ENCODE measurements at regions of chr6 and their contacts with region 1.

Region 1: GRCh38 chr6:37018198-37019064 is 13.0 kb downstream of the FGD2 start:
- DNase-seq: peak; percentile 91
- H3K4me3 ChIP-seq: no peak overlapping the region
- H3K27ac ChIP-seq: no peak overlapping the region
- H3K4me1 ChIP-seq: peaks cover 13% of the 10 kb centered on the region
- CTCF ChIP-seq: peak; percentile 93

Region 2: GRCh38 chr6:36765594-36766398 is 252.6 kb before region 1 on chr6:
- CTCF ChIA-PET with region 1: no interaction called
- POLR2A ChIA-PET with region 1: no interaction called
- intact Hi-C with region 1: loop called (anchors 1 kb)
- DNase-seq: peak; percentile 91
- H3K4me3 ChIP-seq: peak overlapping the region; percentile 2
- H3K27ac ChIP-seq: peak overlapping the region; percentile 4
- H3K4me1 ChIP-seq: peaks cover 45% of the 10 kb centered on the region
- CTCF ChIP-seq: peak; percentile 99

Region 3: DNA sequence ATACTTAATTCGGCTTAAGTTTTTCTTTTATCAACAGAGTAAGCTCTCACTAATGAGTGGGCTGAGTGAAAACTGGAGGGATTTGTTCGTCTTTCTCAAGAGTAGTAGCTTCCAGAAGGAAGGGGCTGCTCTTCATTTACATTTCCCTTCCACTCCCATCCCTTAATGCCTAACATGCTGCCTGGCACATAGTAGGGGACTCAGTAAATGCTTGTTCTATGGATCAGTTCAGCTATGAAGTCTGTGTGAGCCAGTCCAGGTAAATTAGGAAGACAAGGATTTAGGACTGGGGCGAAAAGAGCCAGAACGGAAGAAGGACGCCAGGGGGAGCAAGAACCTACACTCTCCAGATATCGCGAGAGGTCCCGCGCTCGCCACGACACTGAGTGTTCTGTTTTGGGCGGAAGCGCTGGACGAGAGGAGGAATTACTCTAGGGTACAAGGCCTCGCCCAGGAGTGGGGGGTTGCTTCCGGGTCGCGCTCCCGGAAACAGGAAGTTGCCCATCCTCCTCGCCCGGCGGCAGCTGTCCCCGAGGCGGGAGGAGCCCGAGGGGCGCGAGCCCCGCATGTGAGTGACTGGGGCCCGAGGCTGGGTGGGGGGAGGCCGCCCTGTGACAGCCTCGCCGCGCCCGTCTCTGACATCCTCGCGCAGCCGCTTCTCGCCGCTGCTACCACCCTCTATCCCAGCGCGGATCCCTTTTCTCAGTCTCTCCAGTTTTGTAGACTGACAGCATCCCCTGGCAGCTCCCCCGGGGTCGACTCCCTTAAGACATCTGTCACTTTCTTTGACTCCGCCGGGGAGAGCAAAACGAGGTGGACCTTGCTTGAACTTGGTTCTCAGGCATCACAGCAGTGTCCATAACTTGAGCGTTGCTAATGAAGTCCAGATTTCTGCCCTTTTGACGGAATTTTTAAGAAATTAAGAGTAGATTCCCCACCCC is 132.7 kb before region 1 on chr6 and contains the start of gene C6orf89:
- CTCF ChIA-PET with region 1: interaction called, 7 read pairs
- POLR2A ChIA-PET with region 1: interaction called, 7 read pairs
- intact Hi-C with region 1: loop called (anchors 1 kb)
- DNase-seq: peak; percentile 100
- H3K4me3 ChIP-seq: peak within 1 kb of the TSS; percentile 82
- H3K27ac ChIP-seq: peak within 1 kb of the TSS; percentile 40
- H3K4me1 ChIP-seq: peaks cover 24% of the 10 kb centered on the region
- CTCF ChIP-seq: peak; percentile 87
- total RNA-seq, gene C6orf89: 14.7 and 20.1 TPM in 2 replicates

Region 4: DNA sequence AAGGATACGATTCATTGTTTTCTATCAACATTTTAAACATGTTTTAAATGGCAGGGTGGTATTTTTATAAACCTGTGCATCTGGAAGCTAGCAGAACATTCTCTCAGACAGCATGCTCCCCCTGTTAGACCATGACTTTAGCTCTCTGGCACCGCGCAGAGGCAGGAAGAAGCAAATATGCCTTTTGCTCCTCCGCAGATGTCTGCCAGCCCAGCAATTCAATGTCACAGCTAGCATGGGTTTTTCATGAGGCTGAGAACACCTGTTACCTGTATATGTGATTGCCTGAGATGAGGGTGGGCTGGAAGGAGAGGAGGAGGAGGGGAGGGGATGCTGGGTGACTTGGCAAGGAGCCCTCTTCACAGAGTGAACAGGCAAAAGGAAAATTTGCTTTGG is 39.1 kb before region 1 on chr6:
- CTCF ChIA-PET with region 1: interaction called, 31 read pairs
- POLR2A ChIA-PET with region 1: interaction called, 6 read pairs
- intact Hi-C with region 1: loop called (anchors 1 kb)
- DNase-seq: no peak
- H3K4me3 ChIP-seq: no peak overlapping the region
- H3K27ac ChIP-seq: no peak overlapping the region
- H3K4me1 ChIP-seq: peaks cover 14% of the 10 kb centered on the region
- CTCF ChIP-seq: peak; percentile 35; the same call in 1 of the 2 replicates

Region 5: DNA sequence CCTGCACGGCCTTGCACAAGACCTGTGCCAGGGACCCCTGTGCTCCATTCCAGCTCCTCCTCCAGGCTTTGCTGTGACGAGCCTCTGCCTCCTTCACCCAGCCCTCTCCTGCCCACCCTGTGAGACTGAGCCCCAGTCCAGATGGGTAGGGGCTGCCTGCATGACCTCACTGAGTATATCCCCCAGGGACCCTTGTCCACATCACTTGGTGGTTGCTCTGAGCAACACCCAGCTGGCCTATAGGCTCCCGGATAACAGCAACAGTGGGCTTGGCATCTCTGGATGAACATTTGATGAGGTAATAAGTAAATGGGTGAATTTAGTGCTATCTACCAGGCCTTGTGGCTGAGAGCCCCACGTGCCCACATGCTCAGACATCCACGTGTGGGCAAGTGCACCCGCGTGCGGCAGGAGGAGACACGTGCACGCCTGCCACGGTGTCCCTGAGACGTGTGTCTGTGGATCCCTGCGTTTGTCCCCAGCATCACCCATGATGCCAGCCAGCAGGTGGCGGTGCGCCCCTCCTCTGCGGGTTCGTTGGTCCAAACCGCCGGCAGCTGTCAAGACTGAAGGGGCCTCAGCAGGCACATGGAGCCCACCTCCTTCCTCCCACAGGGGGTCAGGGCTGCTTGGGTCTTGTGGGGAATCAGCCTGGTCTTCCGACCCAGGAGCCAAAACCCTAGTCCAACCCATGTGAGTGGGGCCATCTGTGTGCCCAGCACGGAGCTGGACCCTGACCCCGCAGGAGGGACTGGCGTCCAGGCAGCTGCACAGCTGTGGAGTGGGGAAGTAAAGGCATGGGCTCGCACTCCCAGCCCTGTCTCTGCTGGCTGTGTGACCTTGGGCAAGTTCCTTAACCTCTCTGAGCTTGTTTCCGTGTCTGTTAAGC is 33.0 kb after region 1 on chr6:
- CTCF ChIA-PET with region 1: interaction called, 3 read pairs
- POLR2A ChIA-PET with region 1: interaction called, 4 read pairs
- intact Hi-C with region 1: loop called (anchors 2 kb)
- DNase-seq: peak; percentile 92
- H3K4me3 ChIP-seq: no peak overlapping the region
- H3K27ac ChIP-seq: no peak overlapping the region
- H3K4me1 ChIP-seq: peaks cover 41% of the 10 kb centered on the region
- CTCF ChIP-seq: peak; percentile 94

Region 6: DNA sequence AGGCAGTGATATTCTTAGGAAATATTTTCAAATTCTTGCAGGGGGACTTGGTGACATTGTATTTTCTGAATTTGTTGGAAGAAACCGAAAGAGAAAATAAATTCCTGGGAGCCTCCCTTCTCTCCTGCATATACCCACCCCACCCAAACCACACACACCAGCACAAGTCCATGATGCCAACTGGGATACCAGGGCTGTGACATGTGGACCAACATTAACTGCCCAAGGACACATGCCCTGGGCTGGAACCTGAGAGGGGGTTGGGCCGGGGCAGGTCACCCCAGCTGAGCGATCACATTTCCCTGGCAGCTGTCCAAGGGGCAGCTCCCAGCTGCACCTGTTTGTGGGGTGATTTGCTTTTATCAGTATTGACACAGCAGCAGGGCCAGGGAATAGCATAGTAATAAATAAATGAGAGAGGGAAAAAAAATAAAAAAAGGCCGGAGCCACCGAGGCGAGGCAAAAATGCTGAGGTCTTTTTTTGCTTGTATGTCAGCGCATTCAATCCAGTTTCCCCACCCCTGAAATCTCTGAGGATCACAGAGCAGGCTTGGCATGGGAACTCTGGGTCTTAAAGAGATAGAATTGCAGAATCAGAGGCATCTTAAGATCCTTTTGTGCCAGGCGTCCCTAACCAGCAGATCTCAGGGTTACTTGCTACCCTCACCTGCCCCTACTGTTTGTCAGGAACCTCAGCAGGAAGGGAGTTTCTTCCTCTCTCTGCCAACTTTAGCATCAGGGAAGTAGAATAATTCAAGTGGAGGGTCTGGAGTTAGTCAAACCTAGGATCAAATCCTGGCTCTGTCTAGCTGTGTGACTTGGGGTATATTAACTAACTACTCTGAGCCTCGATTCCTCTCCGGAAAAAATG is 85.0 kb after region 1 on chr6:
- CTCF ChIA-PET with region 1: no interaction called
- POLR2A ChIA-PET with region 1: no interaction called
- intact Hi-C with region 1: no loop called
- DNase-seq: peak; percentile 73
- H3K4me3 ChIP-seq: peak overlapping the region; percentile 64
- H3K27ac ChIP-seq: peak overlapping the region; percentile 74
- H3K4me1 ChIP-seq: peaks cover 54% of the 10 kb centered on the region
- CTCF ChIP-seq: no peak

Region 7: GRCh38 chr6:37207903-37208456 is 189.5 kb after region 1 on chr6:
- CTCF ChIA-PET with region 1: interaction called, 7 read pairs
- POLR2A ChIA-PET with region 1: no interaction called
- intact Hi-C with region 1: loop called (anchors 1 kb)
- DNase-seq: peak; percentile 81
- H3K4me3 ChIP-seq: no peak overlapping the region
- H3K27ac ChIP-seq: no peak overlapping the region
- H3K4me1 ChIP-seq: no peaks in the 10 kb centered on the region
- CTCF ChIP-seq: peak; percentile 88

Measured in OCI-LY7 (cell line).